ENCODE measurements at regions of chr2 and their contacts with region 1.

Region 1: GRCh38 chr2:210445116-210445707 is 31.3 kb downstream of the LANCL1 start:
- DNase-seq: no peak
- H3K4me3 ChIP-seq: no peak overlapping the region
- H3K27ac ChIP-seq: no peak overlapping the region
- H3K27me3 ChIP-seq: no peaks in the 10 kb centered on the region
- CTCF ChIP-seq: peak; percentile 69

Region 2: DNA sequence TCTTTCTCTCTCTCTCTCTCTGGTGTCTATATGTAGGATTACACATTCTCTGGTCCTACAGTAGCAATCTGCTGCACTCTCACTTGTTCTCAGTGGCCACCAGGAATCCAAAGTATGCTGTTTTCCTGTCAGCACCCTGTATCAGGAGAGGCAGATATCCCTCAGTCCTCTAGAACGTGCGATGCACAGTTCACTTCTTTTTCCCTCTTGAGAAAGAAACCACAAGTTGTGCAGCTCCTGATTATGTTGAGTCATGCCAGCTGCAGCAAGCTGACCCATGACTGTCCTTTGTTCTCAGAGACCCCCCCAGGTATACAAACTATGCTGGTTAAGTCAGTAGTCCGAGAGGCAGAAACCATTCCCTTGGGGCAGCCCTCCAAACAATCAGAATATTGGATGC is 23.3 kb before region 1 on chr2:
- CTCF ChIA-PET with region 1: no interaction called
- POLR2A ChIA-PET with region 1: no interaction called
- DNase-seq: no peak
- H3K4me3 ChIP-seq: no peak overlapping the region
- H3K27ac ChIP-seq: no peak overlapping the region
- H3K27me3 ChIP-seq: no peaks in the 10 kb centered on the region
- CTCF ChIP-seq: no peak

Region 3: DNA sequence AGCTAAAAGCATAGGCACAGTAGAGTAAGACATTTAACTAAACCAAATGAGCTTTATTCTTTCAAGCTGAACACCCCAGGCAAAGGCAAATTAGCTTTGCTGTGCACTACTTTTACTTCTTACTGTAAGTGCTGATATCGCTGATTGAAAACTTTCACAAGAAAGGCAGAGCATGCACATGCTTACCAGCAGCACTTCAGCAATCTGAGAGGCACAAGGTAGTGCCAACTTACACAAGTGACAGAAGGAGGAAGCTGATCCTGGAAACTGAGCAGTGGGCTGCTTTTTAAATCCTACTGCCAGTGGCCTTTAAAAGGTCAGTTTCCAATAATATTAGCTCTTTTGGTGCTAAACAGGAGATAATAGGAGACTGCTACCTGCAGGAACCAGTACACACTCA is 12.6 kb before region 1 on chr2:
- CTCF ChIA-PET with region 1: interaction called, 10 read pairs
- POLR2A ChIA-PET with region 1: no interaction called
- DNase-seq: no peak
- H3K4me3 ChIP-seq: no peak overlapping the region
- H3K27ac ChIP-seq: no peak overlapping the region
- H3K27me3 ChIP-seq: no peaks in the 10 kb centered on the region
- CTCF ChIP-seq: no peak

Region 4: DNA sequence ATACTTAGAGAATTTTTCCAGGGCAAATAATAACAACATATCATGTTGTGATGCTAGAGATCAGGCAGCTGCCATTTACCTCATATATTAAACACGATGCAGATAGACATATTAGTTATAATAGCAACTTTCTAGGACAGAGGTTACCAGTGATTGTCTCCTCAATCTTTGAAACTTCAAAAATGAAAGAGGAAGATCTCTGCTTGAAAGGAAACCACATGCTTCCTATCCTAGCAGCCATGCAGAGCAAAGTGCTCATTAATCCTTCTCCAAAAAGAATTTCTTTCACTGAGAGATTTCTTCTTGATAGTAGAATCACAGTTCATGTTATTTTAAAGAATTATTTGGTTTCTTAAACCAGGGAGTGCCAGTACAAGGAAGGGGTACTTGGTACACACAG is 428.4 kb after region 1 on chr2:
- CTCF ChIA-PET with region 1: no interaction called
- POLR2A ChIA-PET with region 1: no interaction called
- DNase-seq: no peak
- H3K4me3 ChIP-seq: no peak overlapping the region
- H3K27ac ChIP-seq: no peak overlapping the region
- H3K27me3 ChIP-seq: no peaks in the 10 kb centered on the region
- CTCF ChIP-seq: no peak

Measured in AG04450 (cell line).